ENCODE measurements at regions of chr5 and their contacts with region 1.

Region 1: DNA sequence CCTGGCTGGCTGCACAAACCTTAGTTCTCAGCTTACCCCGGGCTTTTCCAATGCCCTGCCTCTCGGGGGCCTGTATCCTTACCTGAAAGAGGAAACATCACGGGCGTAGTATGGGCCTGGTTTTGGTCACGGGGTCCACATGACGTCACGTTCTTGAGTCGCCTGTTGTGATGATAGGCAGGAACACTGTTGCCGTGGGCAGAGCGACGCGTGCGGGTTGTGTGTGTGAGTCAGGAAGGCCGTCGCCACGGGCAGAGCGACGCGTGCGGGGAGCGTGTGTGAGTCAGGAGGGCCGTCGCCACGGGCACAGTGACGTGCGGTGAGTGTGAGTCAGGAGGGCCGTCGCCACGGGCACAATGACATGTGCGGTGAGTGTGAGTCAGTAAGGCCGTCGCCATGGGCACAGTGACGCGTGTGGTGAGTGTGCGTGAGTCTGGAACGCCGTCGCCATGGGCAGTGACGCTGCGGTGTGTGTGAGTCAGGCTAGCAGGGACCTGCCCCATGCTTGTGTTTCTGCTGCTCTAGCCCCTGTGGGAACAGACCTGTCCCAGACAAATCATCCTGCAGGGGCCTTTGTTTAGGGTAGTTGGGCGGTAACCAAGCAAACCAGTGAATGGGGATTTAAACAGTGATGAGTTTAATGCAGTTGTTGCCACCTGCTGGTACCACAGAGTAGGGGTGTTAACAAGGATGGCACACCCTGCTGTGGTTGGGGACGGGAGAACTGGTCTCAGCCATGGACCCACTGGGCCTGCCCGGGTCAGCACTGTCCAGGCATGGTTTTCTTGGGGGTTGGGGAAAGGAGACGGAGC is 19.8 kb downstream of the TRIP13 start:
- DNase-seq: peak; percentile 41
- H3K4me3 ChIP-seq: no peak overlapping the region
- H3K27me3 ChIP-seq: no peaks in the 10 kb centered on the region
- CTCF ChIP-seq: no peak

Region 2: DNA sequence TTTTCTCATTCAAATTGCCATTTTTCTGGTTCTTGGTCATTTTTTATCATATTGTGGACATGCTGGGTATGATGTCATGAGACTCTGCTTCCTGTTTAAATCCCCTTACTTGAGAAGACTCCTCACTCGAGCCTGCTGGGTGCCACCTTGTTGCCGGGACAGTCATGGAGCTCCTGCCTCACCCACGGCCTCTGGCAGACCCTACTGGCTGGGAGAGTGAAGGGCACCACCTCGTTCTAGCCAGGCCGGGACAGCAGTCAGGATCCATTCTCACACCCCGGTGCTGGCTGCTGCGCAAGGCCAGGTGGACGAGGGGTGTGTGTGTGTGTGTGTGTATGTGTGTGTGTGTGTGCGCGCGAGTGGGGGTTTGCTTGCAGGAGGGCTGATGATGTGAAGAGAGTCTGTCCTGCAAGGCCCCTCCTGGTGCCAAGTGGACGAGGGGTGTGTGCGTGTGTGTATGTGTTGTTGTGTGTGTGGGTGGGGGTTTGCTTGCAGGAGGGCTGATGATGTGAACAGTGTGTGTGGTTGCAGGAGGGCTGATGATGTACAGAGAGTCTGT is 295.9 kb before region 1 on chr5:
- CTCF ChIA-PET with region 1: no interaction called
- POLR2A ChIA-PET with region 1: no interaction called
- DNase-seq: no peak
- H3K4me3 ChIP-seq: no peak overlapping the region
- H3K27me3 ChIP-seq: no peaks in the 10 kb centered on the region
- CTCF ChIP-seq: no peak

Region 3: DNA sequence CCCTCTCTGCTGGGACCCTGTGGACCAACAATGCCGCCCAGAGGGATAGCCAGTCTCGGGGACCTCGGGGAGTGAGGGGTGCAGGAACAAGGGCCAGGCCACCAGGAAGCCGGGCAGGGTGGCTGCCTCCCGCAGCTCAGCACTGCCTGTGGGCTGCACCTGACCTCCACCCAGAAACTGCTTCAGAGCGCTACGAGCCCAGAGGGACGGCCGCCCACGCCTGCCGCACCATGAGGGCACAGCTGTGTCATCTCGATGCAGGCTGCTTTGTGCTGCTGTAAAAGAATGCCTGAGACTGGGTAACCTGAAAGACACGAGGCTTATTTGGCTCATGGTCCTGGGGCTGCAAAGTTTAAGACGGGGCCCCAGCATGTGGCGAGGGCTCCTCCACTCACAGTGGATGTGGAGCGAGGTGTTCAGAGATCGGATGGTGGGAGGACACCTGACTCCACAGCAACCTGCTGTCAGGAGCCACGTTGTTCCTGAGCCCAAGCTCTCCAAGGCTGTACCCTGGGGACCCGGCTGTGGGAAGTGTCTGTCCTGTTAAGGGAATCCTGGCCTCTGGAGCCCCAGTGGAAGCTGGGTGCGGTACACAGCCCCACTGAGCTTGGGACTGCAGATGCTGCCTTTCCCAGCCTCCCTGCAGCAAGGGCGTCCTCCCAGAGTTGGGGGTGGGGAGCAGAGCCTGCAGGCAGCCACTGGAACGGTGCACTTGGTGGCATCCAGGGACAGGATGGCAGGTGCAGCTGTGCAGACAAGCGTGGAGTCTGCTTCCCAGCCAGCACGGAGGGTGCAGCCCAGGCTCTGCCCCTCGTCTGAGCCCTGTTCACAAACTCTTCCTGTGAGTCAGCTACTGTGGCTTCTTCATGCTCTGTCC is 49.9 kb before region 1 on chr5:
- CTCF ChIA-PET with region 1: no interaction called
- POLR2A ChIA-PET with region 1: no interaction called
- DNase-seq: no peak
- H3K4me3 ChIP-seq: no peak overlapping the region
- H3K27me3 ChIP-seq: no peaks in the 10 kb centered on the region
- CTCF ChIP-seq: no peak

Region 4: DNA sequence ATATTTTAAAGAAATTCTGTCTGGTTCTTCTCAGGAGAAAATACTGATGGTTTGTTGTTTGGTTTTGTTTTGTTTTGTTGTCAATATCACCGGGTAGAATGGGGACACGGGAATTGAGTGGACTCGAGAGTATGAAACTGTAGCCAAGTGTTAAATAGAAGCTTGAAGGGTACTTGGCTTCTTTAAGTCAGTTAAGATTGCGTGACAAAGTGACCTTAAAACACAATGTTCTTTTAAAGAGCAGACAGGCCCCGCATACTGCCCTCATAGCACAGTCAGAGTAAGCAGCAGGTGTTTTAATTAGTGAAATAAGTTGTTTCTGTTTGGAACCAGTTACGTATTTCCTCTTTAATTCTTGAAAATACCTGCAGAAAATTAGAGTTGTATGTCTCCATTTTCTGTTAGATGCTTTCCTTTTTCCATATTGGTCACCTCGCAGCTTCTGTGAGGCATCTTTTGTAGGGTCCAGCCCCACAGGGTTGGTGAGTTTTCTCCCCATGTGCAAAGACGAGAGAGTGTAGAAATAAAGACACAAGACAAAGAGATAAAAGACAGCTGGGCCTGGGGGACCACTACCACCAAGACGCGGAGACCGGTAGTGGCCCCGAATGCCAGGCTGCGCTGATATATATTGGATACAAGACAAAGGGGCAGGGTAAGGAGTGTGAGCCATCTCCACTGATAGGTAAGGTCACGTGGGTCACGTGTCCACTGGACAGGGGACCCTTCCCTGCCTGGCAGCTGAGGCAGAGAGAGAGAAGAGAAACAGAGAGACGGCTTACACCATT is 10.2 kb before region 1 on chr5:
- CTCF ChIA-PET with region 1: interaction called, 18 read pairs
- POLR2A ChIA-PET with region 1: no interaction called
- DNase-seq: no peak
- H3K4me3 ChIP-seq: no peak overlapping the region
- H3K27me3 ChIP-seq: no peaks in the 10 kb centered on the region
- CTCF ChIP-seq: no peak

Region 5: GRCh38 chr5:989961-990530 is 77.6 kb after region 1 on chr5:
- CTCF ChIA-PET with region 1: no interaction called
- POLR2A ChIA-PET with region 1: no interaction called
- DNase-seq: no peak
- H3K4me3 ChIP-seq: no peak overlapping the region
- H3K27me3 ChIP-seq: peaks cover 18% of the 10 kb centered on the region
- CTCF ChIP-seq: no peak

Measured in BJ (cell line).